ENCODE measurements at regions of chr2 and their contacts with region 1.

Region 1: DNA sequence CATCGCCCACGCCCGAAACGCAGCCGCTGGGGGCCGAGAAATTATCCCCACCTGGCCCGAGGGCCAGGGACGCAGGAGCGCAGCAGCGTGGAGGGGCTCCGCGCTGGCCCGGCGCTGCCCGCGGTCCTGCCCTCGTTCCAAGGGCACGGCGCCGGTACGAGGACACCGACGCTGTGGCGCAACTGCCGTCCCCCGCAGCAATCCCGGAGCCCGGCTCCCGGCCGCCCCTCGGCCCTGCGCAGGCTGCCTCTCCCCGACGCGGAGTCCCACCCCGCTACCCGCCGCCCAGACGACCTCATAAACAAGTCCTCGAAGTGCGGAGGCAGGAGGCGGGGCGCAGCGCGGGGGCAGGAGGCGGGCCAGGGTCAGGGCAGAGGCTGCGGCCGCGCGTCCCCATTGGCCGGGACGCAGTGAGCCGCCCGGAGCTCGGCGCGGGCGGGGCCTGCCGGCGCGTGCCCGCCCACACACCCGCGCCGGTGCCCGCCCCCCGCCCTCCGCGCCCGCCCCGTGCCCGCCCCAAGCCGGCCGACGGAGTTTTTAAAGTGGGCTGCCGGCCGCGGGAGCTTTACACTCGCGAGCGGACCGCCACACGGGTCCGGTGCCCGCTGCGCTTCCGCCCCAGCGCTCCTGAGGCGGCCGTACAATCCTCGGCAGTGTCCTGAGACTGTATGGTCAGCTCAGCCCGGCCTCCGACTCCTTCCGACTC is at the start of gene EPAS1:
- DNase-seq: peak; percentile 91 to 98
- H3K4me3 ChIP-seq: peak within 1 kb of the TSS; percentile 88 to 91
- H3K27ac ChIP-seq: peak within 1 kb of the TSS; percentile 96 to 97
- H3K4me1 ChIP-seq: peaks cover 6 to 18% of the 10 kb centered on the region in 2 donors
- H3K27me3 ChIP-seq: no peaks in the 10 kb centered on the region
- CTCF ChIP-seq: no peak
- total RNA-seq, gene EPAS1: 1,738 TPM

Region 2: DNA sequence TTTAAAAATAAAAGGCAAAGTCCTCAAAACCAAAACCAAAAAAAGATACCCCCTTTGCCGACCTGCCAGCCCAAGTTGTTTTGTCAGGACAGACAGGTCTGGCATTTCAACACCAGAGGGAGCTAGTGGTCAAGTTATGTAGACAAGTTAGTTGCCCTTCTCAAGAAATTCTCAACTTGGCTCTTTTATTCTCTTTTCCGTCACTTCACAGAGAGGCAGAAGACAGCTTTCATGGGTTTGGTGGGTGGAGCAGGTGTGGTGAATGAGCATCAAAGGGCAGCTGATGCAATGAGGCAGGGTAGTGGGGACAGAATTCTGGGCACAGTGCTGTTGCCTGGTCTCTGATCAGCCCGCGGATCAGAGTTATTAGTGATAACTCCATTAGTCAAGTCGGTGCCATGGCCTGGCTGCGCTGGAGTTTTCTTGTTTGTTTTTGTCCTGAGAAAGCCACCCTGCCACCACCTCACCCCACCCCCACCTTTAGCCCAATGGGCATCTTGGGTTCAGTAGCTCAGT is 303.5 kb before region 1 on chr2:
- intact Hi-C with region 1: loop called (anchors 1 kb)
- DNase-seq: peak in 1 of 2 donors; percentile 83
- H3K4me3 ChIP-seq: no peak overlapping the region
- H3K27ac ChIP-seq: peak overlapping the region; percentile 74 to 75
- H3K4me1 ChIP-seq: peaks cover 3 to 23% of the 10 kb centered on the region in 2 donors
- H3K27me3 ChIP-seq: no peaks in the 10 kb centered on the region
- CTCF ChIP-seq: peak; percentile 58 to 87 (median 79)

Region 3: DNA sequence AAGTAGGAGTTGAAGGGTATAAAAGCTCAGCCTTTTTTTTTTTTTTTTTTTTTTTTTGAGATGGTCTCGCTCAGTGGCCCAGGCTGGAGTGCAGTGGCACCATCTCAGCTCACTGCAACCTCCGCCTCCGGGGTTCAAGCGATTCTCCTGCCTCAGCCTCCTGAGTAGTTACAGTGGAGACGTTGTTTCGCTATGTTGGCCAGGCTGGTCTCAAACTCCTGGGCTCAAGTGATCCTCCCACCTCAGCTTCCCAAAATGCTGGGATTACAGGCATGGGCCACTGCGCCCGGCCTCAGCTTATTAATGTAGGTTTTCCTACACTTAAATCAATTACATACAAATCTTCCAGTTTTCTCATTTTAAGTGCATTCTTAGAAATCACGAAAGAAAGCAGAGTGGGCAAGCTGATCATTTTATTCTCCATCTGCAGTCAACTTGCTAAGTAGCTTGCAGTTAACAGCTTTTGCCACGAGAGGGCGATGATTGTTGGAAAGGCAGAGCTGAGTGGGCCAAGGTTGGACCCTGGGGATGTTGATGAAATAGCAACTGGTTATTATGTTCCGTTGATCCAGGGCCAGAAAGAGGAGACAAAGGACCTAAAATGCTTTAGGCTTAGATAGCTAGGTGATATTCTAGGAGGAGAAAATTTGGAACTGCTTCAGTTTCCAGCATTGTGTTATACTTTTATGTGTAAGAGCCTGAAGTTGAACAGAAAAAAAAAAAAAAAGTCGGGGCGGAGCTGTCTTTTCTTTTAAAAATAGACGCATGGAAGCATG is 234.2 kb before region 1 on chr2:
- intact Hi-C with region 1: loop called (anchors 1 kb)
- DNase-seq: peak; percentile 12 to 93
- H3K4me3 ChIP-seq: no peak overlapping the region
- H3K27ac ChIP-seq: no peak overlapping the region
- H3K4me1 ChIP-seq: peaks cover 3 to 4% of the 10 kb centered on the region in 2 donors
- H3K27me3 ChIP-seq: no peaks in the 10 kb centered on the region
- CTCF ChIP-seq: peak; percentile 83 to 94 (median 88)

Region 4: DNA sequence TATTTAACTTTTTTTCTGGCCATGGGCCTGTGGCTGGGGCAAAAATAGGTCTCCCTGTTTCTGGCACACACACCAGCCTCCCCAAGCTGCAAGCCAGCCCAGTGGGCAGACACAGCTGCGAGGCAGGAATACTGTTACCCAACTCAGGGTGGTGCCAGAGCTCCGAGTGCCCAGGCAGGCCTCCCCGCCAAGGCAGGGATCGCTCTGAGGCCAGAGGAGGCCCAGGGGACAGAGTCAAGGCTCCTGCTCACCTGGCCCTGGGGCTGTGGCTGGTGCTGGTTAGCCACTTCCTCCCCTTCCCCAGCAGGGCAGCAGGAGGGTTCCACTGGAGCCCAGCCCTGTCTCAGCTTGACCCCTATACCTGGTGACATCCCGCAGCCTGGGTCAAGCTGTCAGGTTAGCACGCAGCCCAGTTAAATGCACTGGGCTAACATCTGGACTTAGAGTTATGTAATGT is 66.8 kb before region 1 on chr2:
- intact Hi-C with region 1: loop called (anchors 5 kb)
- DNase-seq: peak in 1 of 2 donors; percentile 74
- H3K4me3 ChIP-seq: no peak overlapping the region
- H3K27ac ChIP-seq: peak overlapping the region; percentile 24 to 42
- H3K4me1 ChIP-seq: peaks cover 0 to 8% of the 10 kb centered on the region in 2 donors
- H3K27me3 ChIP-seq: no peaks in the 10 kb centered on the region
- CTCF ChIP-seq: peak in 2 of 3 experiments; percentile 53 to 54

Region 5: DNA sequence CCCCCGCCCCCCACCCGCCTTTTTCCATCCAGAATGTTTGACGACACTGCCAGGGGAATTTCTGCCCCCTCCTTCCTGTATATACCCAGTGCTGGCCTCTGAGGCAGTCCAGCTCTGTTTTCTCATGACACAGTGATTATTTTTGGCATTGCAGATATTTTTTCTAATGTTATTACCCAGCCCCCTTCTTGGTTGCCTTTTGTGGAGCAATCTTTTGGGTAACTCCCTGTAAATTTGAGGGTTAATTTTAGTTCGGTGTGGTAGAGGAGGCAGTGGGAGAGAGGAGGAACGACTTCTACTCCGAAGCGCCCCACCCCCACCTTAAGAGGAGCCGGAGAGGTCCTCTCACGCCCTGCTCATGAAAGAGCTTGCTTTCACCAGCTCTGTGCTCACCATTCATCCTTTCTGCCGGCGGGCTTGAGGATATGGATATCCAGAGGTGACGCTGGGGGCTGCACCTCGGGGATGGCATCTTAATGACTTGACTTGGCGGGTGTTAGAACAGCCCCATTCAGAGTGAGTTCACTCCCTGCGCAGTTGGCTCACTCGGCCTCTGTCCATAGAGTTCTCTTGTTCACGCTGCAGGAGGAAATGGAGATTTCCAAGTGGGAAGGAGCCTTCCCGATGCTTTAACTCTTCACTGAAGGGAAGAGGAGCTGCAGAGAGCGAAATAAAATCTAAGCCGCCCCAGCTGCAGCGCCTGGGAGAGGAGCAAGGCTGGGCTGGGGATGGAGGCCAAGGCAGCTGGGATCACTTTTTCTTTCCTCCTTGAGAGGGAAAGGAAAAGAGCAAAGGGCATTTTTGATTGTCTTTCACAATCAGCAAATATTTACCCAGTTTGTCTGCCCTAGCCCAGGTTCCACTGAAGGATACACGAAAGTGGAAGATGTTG is 38.6 kb after region 1 on chr2:
- intact Hi-C with region 1: loop called (anchors 2 kb)
- DNase-seq: peak in 1 of 2 donors; percentile 83
- H3K4me3 ChIP-seq: peak overlapping the region; percentile 42 to 55
- H3K27ac ChIP-seq: peak overlapping the region; percentile 86 to 92
- H3K4me1 ChIP-seq: peaks cover 18 to 82% of the 10 kb centered on the region in 2 donors
- H3K27me3 ChIP-seq: no peaks in the 10 kb centered on the region
- CTCF ChIP-seq: peak in 1 of 3 experiments; percentile 4

Region 6: GRCh38 chr2:46461011-46461674 is 164.2 kb after region 1 on chr2:
- intact Hi-C with region 1: loop called (anchors 2 kb)
- DNase-seq: peak in 1 of 2 donors; percentile 90
- H3K4me3 ChIP-seq: no peak overlapping the region
- H3K27ac ChIP-seq: peak overlapping the region in 1 of 2 donors; percentile 45
- H3K4me1 ChIP-seq: peaks cover 0 to 8% of the 10 kb centered on the region in 2 donors
- H3K27me3 ChIP-seq: no peaks in the 10 kb centered on the region
- CTCF ChIP-seq: peak; percentile 96 to 100 (median 99)

Measured in ascending aorta (tissue), 2 donors.